ENCODE measurements at regions of chr12 and their contacts with region 1.

Region 1: DNA sequence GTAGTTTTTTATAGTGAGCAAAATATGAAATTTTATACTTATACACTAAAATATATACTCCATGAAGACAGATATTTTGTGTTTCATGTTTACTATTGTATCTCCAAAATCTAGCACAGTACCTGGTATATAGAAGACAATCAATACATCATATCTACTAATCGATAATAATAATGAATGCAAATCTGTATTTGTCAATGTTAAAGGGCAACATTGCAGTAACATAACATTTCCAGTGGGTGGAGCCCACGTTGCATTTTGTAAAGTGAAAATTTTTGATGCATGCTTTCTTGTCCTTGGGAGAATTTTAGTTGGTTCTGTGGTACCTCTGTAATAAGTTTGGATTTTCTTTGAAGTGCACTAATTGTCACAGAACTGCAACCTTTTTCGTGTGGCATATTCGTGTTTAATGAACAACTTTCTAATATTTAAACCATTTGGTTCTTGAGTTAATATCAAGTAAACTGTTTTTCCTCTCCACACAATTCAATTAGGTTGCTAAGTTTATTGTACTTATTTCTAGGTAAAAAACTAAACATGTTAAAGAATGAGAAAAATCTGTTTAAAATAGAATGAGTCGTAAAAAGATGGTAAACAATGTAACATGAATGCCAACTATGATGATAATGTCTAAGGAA is 47.4 kb downstream of the AVPR1A start:
- DNase-seq: no peak
- ATAC-seq: no peak
- H3K4me3 ChIP-seq: no peak overlapping the region
- H3K27ac ChIP-seq: no peak overlapping the region
- H3K4me1 ChIP-seq: no peaks in the 10 kb centered on the region
- H3K27me3 ChIP-seq: peaks cover 0 to 4% (median 0%) of the 10 kb centered on the region in 9 donors
- CTCF ChIP-seq: peak; percentile 76 to 89 (median 84)
- POLR2A ChIP-seq: no peak

Region 2: GRCh38 chr12:62891805-62892549 is 211.6 kb before region 1 on chr12:
- intact Hi-C with region 1: no loop called
- DNase-seq: no peak
- ATAC-seq: no peak
- H3K4me3 ChIP-seq: no peak overlapping the region
- H3K27ac ChIP-seq: no peak overlapping the region
- H3K4me1 ChIP-seq: peaks cover 0 to 20% (median 1%) of the 10 kb centered on the region in 12 donors
- H3K27me3 ChIP-seq: no peaks in the 10 kb centered on the region
- CTCF ChIP-seq: no peak
- POLR2A ChIP-seq: no peak

Region 3: GRCh38 chr12:63445224-63445880 is 341.7 kb after region 1 on chr12:
- intact Hi-C with region 1: loop called in 5 of 10 experiments (anchors 5 to 10 kb)
- DNase-seq: no peak
- ATAC-seq: no peak
- H3K4me3 ChIP-seq: no peak overlapping the region
- H3K27ac ChIP-seq: no peak overlapping the region
- H3K4me1 ChIP-seq: no peaks in the 10 kb centered on the region
- H3K27me3 ChIP-seq: no peaks in the 10 kb centered on the region
- CTCF ChIP-seq: no peak
- POLR2A ChIP-seq: no peak

Region 4: DNA sequence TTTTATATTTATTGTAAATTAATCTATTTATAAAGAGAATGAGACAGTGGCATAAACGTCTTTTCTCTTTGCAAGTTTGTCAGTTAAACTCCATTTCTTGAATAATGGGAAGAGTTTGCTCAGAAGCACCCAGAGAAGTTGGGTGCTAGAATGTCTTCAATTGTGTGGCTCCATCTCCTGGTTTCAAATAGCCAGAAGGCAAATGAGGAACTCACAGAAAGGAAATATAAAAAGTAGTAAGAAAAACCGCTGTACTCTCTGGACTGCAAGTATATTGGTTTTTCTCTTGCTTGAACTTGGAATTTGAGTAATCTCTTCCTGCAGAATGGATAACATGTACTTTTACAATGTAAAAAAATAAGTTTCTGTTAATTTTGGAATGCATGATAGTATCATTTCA is 347.2 kb after region 1 on chr12:
- intact Hi-C with region 1: loop called in 5 of 10 experiments (anchors 5 to 10 kb)
- DNase-seq: no peak
- ATAC-seq: no peak
- H3K4me3 ChIP-seq: no peak overlapping the region
- H3K27ac ChIP-seq: no peak overlapping the region
- H3K4me1 ChIP-seq: no peaks in the 10 kb centered on the region
- H3K27me3 ChIP-seq: no peaks in the 10 kb centered on the region
- CTCF ChIP-seq: peak in 7 of 12 donors; percentile 7 to 43 (median 22)
- POLR2A ChIP-seq: no peak

Region 5: DNA sequence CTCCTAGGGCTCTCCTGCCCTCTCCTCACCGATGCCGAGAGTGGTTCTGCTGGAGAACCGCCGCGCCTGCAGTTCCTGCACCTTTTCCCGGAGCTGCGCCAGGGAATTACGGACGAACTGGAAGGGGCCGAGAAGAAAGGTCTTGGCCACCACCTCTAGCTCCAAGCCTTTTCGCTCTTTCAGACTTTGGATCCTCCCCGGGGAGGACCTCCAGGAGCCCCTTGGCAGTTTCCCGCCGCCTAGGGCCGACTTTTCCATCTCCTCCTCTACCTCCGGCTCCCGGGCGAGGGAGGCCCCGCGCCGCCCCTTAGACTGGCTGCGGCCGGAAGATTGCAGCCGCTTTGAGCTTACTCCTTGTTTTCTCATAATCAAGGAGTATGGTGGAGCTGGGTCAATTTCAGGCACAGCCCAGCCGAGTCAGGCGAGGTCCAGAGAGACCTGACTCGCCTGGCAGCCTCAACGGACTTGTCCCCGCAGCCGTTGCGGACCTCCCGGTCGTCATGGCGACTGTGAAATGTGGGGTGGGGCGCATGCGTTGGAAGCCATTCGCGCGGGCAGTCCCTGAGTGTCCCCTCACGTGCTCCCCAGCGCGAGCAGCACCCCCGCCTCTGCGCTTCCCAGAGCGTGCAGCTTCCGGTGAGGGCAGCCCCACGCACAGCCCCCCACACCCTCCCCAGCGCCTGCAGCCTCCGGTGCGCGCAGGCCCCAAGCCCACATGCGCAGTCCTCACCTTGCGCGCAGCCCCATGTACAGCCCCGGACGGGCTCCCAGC is 564.6 kb after region 1 on chr12 and contains the start of gene DPY19L2:
- intact Hi-C with region 1: loop called in 2 of 10 experiments (anchors 10 kb)
- DNase-seq: peak; percentile 83 to 92 (median 89)
- ATAC-seq: peak; percentile 95 to 98 (median 98)
- H3K4me3 ChIP-seq: peak within 1 kb of the TSS; percentile 44 to 86 (median 70)
- H3K27ac ChIP-seq: peak within 1 kb of the TSS; percentile 84 to 98 (median 92)
- H3K4me1 ChIP-seq: peaks cover 0 to 8% (median under 1%) of the 10 kb centered on the region in 12 donors
- H3K27me3 ChIP-seq: peaks cover 0 to 9% (median 0%) of the 10 kb centered on the region in 9 donors
- CTCF ChIP-seq: no peak
- POLR2A ChIP-seq: peak in 1 of 2 donors; percentile 31
- total RNA-seq, gene DPY19L2: 22.9 to 55.0 (median 44.6) TPM

Region 6: DNA sequence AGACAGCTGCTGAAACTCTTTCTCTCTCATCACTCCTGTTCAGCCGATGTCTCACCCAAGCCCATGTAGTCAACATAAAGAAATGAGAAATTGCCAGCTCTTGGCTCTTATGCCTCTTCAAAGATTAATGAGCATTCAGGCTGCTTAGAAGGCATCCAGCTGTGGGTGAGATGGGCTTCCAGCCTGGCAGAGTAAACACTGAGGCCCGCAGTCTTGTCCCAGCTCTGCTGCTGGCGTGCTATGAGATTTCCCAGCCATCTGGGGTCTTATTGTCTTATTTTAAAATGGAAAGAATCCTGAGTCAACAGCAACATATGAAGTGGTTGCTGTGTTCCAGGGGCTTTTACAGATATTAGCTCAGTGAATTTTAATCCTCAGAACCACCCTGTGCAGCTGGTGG is 688.7 kb after region 1 on chr12:
- intact Hi-C with region 1: loop called in 1 of 10 experiments (anchors 5 kb)
- DNase-seq: no peak
- ATAC-seq: no peak
- H3K4me3 ChIP-seq: no peak overlapping the region
- H3K27ac ChIP-seq: no peak overlapping the region
- H3K4me1 ChIP-seq: peaks cover 0 to 3% (median 0%) of the 10 kb centered on the region in 12 donors
- H3K27me3 ChIP-seq: no peaks in the 10 kb centered on the region
- CTCF ChIP-seq: no peak
- POLR2A ChIP-seq: no peak

Region 7: DNA sequence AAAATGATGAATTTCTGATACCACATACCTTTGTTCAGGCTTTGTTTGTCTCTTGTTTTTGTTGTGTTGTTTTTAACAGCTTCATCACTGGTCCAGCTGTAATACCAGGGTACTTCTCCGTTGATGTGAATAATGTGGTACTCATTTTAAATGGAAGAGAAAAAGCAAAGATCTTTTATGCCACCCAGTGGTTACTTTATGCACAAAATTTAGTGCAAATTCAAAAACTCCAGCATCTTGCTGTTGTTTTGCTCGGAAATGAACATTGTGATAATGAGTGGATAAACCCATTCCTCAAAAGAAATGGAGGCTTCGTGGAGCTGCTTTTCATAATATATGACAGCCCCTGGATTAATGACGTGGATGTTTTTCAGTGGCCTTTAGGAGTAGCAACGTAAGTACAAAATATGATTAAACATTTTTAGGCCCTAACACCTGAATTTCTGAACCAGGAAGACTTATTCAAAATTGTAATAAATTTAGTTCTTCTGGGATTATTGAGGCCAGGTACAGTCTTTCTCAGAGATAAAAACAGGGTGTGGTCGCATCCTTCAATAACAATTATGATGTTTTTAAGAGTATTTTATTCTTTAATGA is 698.5 kb after region 1 on chr12:
- intact Hi-C with region 1: loop called (anchors 5 to 10 kb)
- DNase-seq: no peak
- ATAC-seq: no peak
- H3K4me3 ChIP-seq: no peak overlapping the region
- H3K27ac ChIP-seq: no peak overlapping the region
- H3K4me1 ChIP-seq: no peaks in the 10 kb centered on the region
- H3K27me3 ChIP-seq: no peaks in the 10 kb centered on the region
- CTCF ChIP-seq: peak; percentile 34 to 71 (median 60)
- POLR2A ChIP-seq: no peak

Region 8: GRCh38 chr12:64256166-64256800 is 1152.7 kb after region 1 on chr12:
- intact Hi-C with region 1: loop called in 1 of 10 experiments (anchors 10 kb)
- DNase-seq: no peak
- ATAC-seq: peak in 2 of 4 donors; percentile 43 to 50
- H3K4me3 ChIP-seq: peak overlapping the region in 2 of 12 donors; percentile 2 to 5
- H3K27ac ChIP-seq: no peak overlapping the region
- H3K4me1 ChIP-seq: peaks cover 0 to 13% (median 0%) of the 10 kb centered on the region in 12 donors
- H3K27me3 ChIP-seq: no peaks in the 10 kb centered on the region
- CTCF ChIP-seq: peak; percentile 57 to 85 (median 74)
- POLR2A ChIP-seq: no peak

Measured in heart left ventricle (tissue), 16 donors.